Mammary epithelial cell (primary cell): ENCODE measurements at regions of chr11 and their contacts with region 1.

Region 1: DNA sequence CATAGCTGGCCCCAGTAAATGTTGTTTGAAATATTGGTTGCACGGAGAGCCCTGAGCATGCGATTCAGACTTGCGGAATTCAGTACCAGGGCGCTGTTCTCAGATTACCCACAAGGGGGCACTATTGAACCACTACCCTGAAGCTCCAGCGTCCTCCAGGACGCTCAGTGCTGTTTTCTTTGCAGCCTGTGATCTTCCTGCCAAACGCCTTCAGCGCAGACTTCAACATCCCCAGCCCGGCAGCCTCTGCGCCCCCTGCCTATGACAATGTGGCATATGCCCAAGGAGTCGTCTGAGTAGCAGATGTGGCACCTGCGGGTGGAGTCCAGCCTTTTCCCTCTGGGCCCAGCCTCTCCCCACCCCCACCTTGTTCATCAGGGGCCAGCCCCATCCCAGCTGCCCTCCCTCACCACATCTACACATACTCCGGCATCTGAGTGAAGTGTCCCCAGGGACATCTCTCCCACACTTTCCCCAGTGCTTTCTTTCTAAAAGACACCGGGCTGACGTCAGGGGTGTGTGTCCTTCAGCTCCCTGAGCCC is 9.6 kb upstream of the MS4A10 start:
- DNase-seq: peak; percentile 74
- H3K4me3 ChIP-seq: no peak overlapping the region
- H3K27ac ChIP-seq: no peak overlapping the region
- H3K4me1 ChIP-seq: no peaks in the 10 kb centered on the region
- H3K27me3 ChIP-seq: no peaks in the 10 kb centered on the region
- CTCF ChIP-seq: peak; percentile 89 to 93

Region 2: DNA sequence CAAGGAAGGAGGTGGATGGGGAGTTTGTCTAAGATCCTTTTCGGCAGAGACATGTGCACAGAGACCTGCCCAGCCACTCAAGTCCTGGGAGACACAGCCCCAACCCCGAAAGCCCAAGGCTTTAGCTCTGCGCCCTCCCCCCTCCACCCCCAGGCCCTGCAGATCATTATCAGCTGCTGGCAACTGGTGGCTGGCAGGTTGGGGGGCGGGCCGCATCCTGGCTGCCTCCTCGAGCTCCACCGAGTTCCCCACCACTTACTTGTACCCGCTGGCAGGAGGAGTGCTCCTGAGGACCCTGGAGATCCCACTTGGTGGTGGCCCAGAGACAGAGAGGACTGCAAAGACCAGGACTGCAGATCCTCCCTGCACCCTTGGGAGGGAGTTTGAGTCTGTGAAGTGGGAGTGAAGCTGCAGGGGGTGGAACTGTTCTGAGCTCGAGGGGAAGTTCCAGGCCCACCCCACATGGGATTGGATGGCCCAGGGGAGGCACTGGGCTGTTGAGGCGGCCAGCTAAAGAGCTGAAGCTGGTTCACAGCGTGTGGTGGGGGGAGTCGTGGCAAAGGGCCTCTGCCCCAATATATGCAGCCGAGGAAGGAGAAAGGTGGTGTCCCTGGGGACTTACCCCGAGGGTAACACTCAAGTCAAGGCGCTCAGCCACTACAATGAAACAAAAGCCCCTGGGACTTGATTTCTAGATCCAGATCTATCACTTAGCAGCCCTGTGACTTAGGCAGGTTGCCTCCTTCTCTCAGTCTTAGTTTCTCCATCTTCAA is 46.5 kb after region 1 on chr11:
- CTCF ChIA-PET with region 1: no interaction called
- dilution Hi-C with region 1: loop called (anchors 5 kb)
- in situ Hi-C with region 1: no loop called
- intact Hi-C with region 1: no loop called
- DNase-seq: no peak
- H3K4me3 ChIP-seq: no peak overlapping the region
- H3K27ac ChIP-seq: no peak overlapping the region
- H3K4me1 ChIP-seq: no peaks in the 10 kb centered on the region
- H3K27me3 ChIP-seq: peaks cover 4% of the 10 kb centered on the region
- CTCF ChIP-seq: no peak

Region 3: DNA sequence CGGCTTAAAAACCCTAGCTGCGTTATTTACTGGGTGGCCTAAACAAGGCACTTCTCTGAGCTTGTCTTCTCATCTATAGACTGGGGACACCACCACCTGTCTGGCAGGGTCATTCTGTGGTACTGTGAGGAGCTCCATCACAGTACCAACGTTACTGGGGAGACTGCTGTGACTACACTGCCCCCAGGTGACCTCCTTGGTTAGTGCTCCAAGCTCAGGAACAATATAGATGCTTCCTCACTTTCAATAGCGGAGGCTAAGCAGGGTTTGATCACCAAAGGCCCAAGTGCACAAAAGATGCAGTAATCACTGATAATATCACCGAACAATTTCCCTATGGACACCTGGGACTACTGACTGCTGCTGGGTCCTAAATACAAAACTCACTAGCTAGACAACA is 112.1 kb after region 1 on chr11:
- CTCF ChIA-PET with region 1: interaction called, 14 read pairs
- dilution Hi-C with region 1: no loop called
- in situ Hi-C with region 1: no loop called
- intact Hi-C with region 1: loop called (anchors 1 kb)
- DNase-seq: peak; percentile 29
- H3K4me3 ChIP-seq: no peak overlapping the region
- H3K27ac ChIP-seq: no peak overlapping the region
- H3K4me1 ChIP-seq: no peaks in the 10 kb centered on the region
- H3K27me3 ChIP-seq: no peaks in the 10 kb centered on the region
- CTCF ChIP-seq: peak; percentile 64 to 67

Region 4: DNA sequence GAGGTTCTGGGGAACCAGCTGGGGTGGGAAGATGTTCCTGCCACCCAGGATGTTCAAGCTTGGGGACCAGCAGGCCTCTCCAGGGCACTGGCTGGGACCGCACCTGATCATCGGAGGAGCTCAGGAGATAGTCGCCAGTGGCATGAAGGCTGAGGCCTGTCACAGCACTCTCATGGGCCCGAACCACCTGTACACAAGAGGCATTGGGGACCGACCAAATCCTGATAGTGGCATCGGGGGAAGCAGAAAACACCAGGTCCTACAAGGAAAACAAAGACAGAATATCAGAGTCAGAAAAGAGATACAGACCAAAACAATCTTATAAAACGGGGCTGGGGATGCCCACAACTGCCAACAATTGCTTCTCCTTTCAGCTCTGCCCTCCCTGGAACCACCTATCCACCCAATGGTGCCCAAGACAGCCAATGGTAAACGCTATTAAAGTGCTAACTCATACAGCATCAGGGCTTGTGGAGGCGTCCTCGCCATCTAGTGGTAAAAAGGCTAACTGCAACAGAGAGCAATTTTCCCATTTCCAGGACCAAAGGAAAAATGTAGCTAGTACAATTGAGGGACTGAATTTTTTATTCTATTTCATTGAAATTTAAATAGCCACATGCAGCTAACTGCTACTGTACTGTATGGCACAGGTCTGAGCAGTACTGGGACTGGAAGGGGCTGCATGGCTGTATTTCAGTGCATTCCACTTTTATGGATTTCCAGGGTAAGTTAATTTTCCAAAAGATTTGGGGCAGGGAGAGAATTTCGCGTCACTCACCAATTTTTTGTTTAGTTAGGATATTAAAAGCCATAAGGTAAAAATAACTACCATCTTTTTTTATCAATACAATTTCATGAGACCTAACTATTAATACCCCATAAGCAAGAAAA is 123.8 kb after region 1 on chr11:
- CTCF ChIA-PET with region 1: no interaction called
- dilution Hi-C with region 1: no loop called
- in situ Hi-C with region 1: no loop called
- intact Hi-C with region 1: loop called (anchors 1 kb)
- DNase-seq: peak; percentile 51
- H3K4me3 ChIP-seq: no peak overlapping the region
- H3K27ac ChIP-seq: no peak overlapping the region
- H3K4me1 ChIP-seq: no peaks in the 10 kb centered on the region
- H3K27me3 ChIP-seq: no peaks in the 10 kb centered on the region
- CTCF ChIP-seq: peak; percentile 94 to 99

Region 5: GRCh38 chr11:60970369-60970774 is 194.9 kb after region 1 on chr11:
- CTCF ChIA-PET with region 1: no interaction called
- dilution Hi-C with region 1: no loop called
- in situ Hi-C with region 1: no loop called
- intact Hi-C with region 1: loop called (anchors 2 kb)
- DNase-seq: peak; percentile 34
- H3K4me3 ChIP-seq: no peak overlapping the region
- H3K27ac ChIP-seq: no peak overlapping the region
- H3K4me1 ChIP-seq: peaks cover 6% of the 10 kb centered on the region
- H3K27me3 ChIP-seq: no peaks in the 10 kb centered on the region
- CTCF ChIP-seq: peak; percentile 91 to 94